ENCODE measurements at regions of chr3 and their contacts with region 1.

Region 1: DNA sequence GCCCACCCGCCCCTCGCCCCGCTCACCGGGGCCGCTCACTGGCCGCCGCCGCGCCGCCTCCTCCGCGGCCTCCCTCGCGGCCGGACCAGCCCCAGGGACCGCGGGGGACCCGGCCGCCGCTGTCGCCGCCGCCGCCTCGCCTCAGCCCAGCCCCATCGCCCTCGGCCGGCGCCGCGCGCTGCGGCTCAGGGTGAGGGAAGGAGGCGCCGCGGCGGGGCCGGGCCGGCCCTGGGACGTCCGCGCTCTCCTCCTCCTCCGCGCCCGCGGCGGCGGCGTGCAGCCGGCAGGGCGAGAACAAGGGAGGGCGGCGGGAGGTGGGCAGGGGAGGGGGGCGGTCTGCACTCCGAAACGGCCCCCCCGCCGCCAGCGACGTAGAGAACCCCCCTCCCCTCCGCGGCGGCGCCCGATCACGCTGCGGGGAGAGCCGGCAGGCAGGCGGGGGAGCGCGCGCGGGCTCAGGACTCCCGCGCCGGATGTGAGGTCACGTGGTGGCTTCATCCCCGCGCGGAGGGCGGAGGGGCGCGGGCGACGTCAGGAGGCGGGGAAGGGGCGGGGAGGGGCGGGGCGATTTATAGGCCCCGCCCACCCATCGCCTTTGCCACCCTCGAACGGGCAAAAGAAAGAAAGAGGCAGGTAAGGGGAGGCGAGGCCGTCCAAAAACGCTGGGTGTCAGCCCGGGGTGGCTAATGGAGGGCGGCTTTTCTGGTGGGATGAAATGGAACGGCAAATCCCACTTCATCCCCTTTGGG is at the start of gene ATP13A3:
- DNase-seq: peak; percentile 83 to 94 (median 91)
- H3K4me3 ChIP-seq: peak within 1 kb of the TSS; percentile 59 to 91 (median 76)
- H3K27ac ChIP-seq: peak within 1 kb of the TSS in 55 of 59 donors; percentile 8 to 91 (median 72)
- H3K27me3 ChIP-seq: no peaks in the 10 kb centered on the region
- CTCF ChIP-seq: peak in 18 of 56 donors; percentile 9 to 37 (median 22)
- total RNA-seq, gene ATP13A3: 47.4 to 93.2 (median 65.7) TPM

Region 2: DNA sequence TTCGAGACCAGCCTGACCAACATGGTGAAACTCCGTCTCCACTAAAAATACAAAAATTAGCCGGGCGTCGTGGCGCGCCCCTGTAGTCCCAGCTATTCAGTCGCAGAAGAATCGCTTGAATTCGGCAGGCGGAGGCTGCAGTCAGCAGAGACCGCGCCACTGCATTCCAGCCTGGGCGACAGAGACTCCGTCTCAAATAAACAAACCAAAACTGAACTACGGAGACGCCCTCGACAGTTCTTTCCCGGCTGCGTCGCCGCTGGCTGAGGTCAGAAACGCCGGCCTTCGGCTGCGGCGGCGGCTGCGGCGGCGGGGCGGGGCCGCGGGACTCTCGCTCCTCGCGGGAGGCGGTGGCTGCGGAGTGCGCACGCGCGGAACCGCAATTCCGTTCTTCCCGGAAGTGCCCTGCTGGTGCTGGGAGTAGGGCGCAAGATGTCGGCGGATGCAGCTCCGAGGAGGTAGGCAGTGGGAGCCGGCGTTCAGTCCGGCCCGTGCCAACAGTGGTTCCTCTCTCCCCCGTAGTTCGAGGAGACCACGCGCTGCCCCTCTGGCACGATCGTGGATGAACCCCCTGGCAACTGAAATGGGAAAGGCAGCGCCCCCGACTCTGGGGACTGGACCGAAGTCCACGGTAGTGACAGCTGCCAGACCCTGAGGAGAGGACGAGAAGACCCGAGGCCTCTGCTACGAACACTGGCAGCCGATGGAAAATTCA is 97.0 kb after region 1 on chr3:
- intact Hi-C with region 1: loop called (anchors 2 to 5 kb)
- DNase-seq: peak; percentile 88 to 96 (median 92)
- H3K4me3 ChIP-seq: peak overlapping the region; percentile 58 to 99 (median 89)
- H3K27ac ChIP-seq: peak overlapping the region; percentile 83 to 98 (median 95)
- H3K27me3 ChIP-seq: no peaks in the 10 kb centered on the region
- CTCF ChIP-seq: peak in 45 of 56 donors; percentile 1 to 67 (median 35)

Region 3: GRCh38 chr3:194671900-194672808 is 185.4 kb after region 1 on chr3 and contains the start of gene LSG1:
- intact Hi-C with region 1: loop called in 1 of 2 experiments (anchors 5 kb)
- DNase-seq: peak; percentile 84 to 91 (median 88)
- H3K4me3 ChIP-seq: peak within 1 kb of the TSS; percentile 63 to 100 (median 91)
- H3K27ac ChIP-seq: peak within 1 kb of the TSS; percentile 75 to 99 (median 93)
- H3K27me3 ChIP-seq: peaks cover 0 to 8% (median 0%) of the 10 kb centered on the region in 45 donors
- CTCF ChIP-seq: peak in 36 of 56 donors; percentile 2 to 62 (median 37)
- total RNA-seq, gene LSG1: 19.3 to 41.3 (median 27.1) TPM

Measured in dorsolateral prefrontal cortex (tissue), 120 donors.